ENCODE measurements at regions of chr18 and their contacts with region 1.

Region 1: GRCh38 chr18:712401-713134 is at the start of gene ENOSF1:
- DNase-seq: peak; percentile 85
- H3K4me3 Mint-ChIP-seq: peak within 1 kb of the TSS; percentile 86
- H3K27ac Mint-ChIP-seq: peak within 1 kb of the TSS; percentile 87
- H3K4me1 Mint-ChIP-seq: peaks cover 43% of the 10 kb centered on the region
- H3K27me3 Mint-ChIP-seq: no peaks in the 10 kb centered on the region
- total RNA-seq, gene ENOSF1: 93.6 and 102 TPM in 2 replicates

Region 2: GRCh38 chr18:267688-268552 is 444.6 kb before region 1 on chr18 and contains the start of gene THOC1:
- intact Hi-C with region 1: loop called (anchors 10 kb)
- DNase-seq: peak; percentile 93
- H3K4me3 Mint-ChIP-seq: peak within 1 kb of the TSS; percentile 98
- H3K27ac Mint-ChIP-seq: peak within 1 kb of the TSS; percentile 100
- H3K4me1 Mint-ChIP-seq: peaks cover 19% of the 10 kb centered on the region
- H3K27me3 Mint-ChIP-seq: no peaks in the 10 kb centered on the region
- total RNA-seq, gene THOC1: 70.6 and 72.8 TPM in 2 replicates

Region 3: DNA sequence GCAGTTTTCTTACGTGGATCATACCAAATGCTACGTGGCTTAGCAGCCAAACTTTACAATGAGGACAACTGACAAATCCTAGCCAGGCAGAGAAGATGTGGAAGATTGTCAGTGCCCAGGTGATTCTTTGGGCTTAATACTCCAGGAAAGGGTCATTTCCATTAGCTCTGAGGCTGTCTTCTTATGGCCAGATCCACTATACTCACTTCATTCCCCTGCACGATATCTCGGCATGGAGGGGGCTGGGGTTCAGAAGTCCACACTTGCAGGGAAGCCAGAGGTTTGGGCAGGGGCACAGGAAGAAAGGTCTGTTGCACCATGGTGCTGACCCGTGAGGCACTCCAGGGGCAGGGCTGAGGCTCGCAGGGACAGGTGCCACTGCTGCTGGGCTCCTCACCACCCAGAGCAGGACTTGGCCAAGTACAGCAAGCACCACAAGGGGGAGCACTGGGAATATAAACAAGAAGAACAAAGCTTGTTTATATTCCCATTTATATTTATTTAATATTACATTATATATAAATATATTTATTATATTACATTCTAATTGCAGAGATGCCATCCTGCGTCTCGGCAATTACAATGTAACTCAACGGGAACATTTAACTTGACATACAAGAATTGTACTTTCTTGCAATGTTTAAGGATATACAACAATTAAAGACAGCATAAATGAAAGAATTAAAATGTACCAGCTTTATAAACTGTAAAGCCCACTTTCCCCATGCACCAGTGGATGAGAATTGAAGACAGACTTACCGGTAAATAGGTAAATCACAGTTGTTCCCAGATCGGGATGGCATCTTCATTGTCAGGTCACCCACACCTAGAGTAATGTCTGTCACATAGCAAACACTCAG is 88.6 kb before region 1 on chr18:
- intact Hi-C with region 1: loop called (anchors 5 kb)
- DNase-seq: peak; percentile 43
- H3K4me3 Mint-ChIP-seq: no peak overlapping the region
- H3K27ac Mint-ChIP-seq: no peak overlapping the region
- H3K4me1 Mint-ChIP-seq: peaks cover 2% of the 10 kb centered on the region
- H3K27me3 Mint-ChIP-seq: peaks cover 34% of the 10 kb centered on the region

Region 4: GRCh38 chr18:658001-658946 is 54.3 kb before region 1 on chr18:
- intact Hi-C with region 1: loop called (anchors 1 kb)
- DNase-seq: peak; percentile 75
- H3K4me3 Mint-ChIP-seq: peak overlapping the region; percentile 94
- H3K27ac Mint-ChIP-seq: peak overlapping the region; percentile 94
- H3K4me1 Mint-ChIP-seq: peaks cover 38% of the 10 kb centered on the region
- H3K27me3 Mint-ChIP-seq: no peaks in the 10 kb centered on the region

Region 5: DNA sequence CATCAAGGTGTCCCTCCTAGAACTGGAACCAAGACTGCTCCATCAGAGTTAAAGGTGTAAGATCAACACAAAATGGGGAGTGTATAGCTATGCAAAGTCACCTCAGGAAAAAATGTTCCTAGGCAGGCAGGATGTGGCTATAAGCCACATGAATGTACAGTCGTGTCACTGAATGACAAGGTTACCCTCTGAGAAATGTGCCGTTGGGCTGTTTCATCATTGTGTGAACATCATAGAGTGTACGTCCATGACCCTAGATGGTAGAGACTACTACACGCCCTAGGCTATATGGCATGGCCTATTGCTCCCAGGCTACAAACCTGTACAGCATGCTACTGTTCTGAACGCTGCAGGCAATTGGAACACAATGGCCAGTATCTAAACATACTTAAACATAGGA is 30.6 kb before region 1 on chr18:
- intact Hi-C with region 1: loop called (anchors 1 kb)
- DNase-seq: peak; percentile 72
- H3K4me3 Mint-ChIP-seq: peak overlapping the region; percentile 9
- H3K27ac Mint-ChIP-seq: peak overlapping the region; percentile 90
- H3K4me1 Mint-ChIP-seq: peaks cover 29% of the 10 kb centered on the region
- H3K27me3 Mint-ChIP-seq: no peaks in the 10 kb centered on the region

Region 6: DNA sequence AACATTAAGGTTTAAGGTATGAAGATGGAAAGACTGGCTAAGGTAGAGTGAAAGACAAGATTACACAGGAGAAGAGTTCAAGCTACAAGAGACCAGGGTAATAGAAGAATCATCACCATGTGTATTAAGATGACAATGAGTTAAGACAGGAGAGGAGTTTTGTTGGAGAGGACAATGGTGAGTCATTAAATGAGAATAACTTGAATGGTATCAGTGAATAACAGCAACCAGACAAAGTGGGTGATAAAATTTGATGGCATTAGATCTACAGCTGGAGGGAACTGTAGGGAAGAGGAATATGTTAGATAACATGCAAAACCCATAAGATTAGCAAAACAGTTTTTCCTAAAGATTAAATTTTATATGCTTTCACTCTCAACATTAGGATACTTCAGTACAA is 18.6 kb after region 1 on chr18:
- intact Hi-C with region 1: no loop called
- DNase-seq: no peak
- H3K4me3 Mint-ChIP-seq: no peak overlapping the region
- H3K27ac Mint-ChIP-seq: peak overlapping the region; percentile 3
- H3K4me1 Mint-ChIP-seq: peaks cover 8% of the 10 kb centered on the region
- H3K27me3 Mint-ChIP-seq: no peaks in the 10 kb centered on the region

Measured in activated T-helper 2 cell treated with anti-CD3 and anti-CD28 coated beads, Interferon-gamma antibody, Interleukin-2, Interleukin-4, amounts not matched to agents 10 μg/mL and 5 μg/mL and 100 μg/mL, durations not matched to agents 14 hours and 24 hours and 36 hours (primary cell).